ENCODE measurements at regions of chr14 and their contacts with region 1.

Region 1: DNA sequence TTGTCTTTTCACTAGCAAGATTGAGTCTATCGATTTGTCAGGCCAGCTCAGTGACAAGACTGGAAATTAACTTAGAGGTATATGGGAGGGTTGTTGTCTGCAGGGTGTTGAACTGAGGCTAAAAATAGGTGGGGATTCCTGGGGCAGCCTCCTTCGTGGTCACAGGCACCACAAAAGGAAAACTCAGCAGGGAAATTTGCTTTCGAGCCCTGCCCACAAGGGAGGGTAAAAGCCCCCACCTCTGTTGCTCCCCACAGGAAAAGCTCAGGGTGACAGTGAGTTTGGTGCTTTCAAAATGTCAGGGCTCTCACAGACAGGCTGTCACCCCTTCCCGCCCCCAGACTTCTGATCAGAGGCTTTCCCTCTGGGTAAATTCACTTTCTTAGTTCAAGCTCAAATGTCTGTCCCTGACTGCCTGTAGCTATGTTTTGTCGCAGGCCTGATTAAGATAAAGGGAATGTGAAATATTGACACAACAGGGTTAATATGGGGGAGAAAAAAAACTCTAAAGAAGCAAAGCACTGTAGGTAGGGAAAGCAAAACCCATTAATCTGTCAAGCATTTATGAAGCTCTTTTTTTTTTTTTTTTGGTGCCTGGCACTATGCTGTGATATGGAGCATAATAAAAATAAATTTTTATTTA is 11.7 kb upstream of the NFKBIA start:
- DNase-seq: peak; percentile 72
- H3K4me3 Mint-ChIP-seq: peak overlapping the region; percentile 79
- H3K27ac Mint-ChIP-seq: peak overlapping the region; percentile 98
- H3K4me1 Mint-ChIP-seq: peaks cover 64% of the 10 kb centered on the region
- H3K27me3 Mint-ChIP-seq: peaks cover 2% of the 10 kb centered on the region

Region 2: GRCh38 chr14:34629657-34630529 is 786.3 kb before region 1 on chr14 and contains the start of gene SNX6:
- intact Hi-C with region 1: loop called (anchors 5 kb)
- DNase-seq: peak; percentile 76
- H3K4me3 Mint-ChIP-seq: peak within 1 kb of the TSS; percentile 95
- H3K27ac Mint-ChIP-seq: peak within 1 kb of the TSS; percentile 99
- H3K4me1 Mint-ChIP-seq: peaks cover 8% of the 10 kb centered on the region
- H3K27me3 Mint-ChIP-seq: peaks cover 11% of the 10 kb centered on the region
- total RNA-seq, gene SNX6: 70.3 and 75.6 TPM in 2 replicates

Region 3: DNA sequence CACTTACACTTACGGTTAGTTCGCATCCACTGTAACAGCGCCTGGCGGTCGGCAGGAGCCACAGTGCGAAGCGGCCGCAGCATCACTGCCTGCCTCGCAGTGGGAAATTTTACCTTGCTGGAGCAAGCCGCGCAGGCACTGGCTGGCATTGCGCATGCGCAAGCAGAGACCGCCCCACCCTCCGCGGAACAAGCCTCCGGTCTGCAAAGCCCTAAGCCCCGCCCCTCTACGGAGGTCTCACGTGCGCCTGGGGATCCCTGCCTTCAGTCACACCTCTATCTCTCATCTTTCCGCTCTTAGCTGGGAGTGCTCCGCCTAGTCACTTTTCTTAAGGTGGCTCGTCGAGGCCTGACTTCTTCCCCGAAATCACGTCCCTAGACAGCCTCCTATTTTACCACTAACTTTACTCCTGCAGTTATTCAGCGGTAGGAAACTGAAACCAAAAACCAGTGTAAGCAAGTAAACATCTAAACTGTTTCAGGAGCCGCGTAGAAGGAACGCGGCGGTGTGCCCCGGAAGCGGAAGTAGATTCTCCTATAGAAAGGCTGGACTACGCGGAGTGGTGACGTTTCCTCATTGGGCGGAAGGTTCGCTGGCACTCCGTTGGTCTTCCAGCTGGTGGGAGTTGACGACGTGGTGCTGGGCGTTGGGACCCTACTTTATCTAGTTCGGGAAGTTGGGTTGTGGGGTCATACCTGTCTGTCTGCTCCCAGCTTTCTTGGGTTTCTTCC is 433.6 kb before region 1 on chr14 and contains the start of gene SRP54:
- intact Hi-C with region 1: loop called (anchors 1 kb)
- DNase-seq: peak; percentile 100
- H3K4me3 Mint-ChIP-seq: no peak within 1 kb of the TSS
- H3K27ac Mint-ChIP-seq: no peak within 1 kb of the TSS
- H3K4me1 Mint-ChIP-seq: peaks cover 6% of the 10 kb centered on the region
- H3K27me3 Mint-ChIP-seq: no peaks in the 10 kb centered on the region
- total RNA-seq, gene SRP54: 76.1 and 76.2 TPM in 2 replicates

Region 4: GRCh38 chr14:35140718-35141581 is 275.3 kb before region 1 on chr14:
- intact Hi-C with region 1: loop called (anchors 1 kb)
- DNase-seq: no peak
- H3K4me3 Mint-ChIP-seq: no peak overlapping the region
- H3K27ac Mint-ChIP-seq: no peak overlapping the region
- H3K4me1 Mint-ChIP-seq: peaks cover 29% of the 10 kb centered on the region
- H3K27me3 Mint-ChIP-seq: no peaks in the 10 kb centered on the region

Region 5: DNA sequence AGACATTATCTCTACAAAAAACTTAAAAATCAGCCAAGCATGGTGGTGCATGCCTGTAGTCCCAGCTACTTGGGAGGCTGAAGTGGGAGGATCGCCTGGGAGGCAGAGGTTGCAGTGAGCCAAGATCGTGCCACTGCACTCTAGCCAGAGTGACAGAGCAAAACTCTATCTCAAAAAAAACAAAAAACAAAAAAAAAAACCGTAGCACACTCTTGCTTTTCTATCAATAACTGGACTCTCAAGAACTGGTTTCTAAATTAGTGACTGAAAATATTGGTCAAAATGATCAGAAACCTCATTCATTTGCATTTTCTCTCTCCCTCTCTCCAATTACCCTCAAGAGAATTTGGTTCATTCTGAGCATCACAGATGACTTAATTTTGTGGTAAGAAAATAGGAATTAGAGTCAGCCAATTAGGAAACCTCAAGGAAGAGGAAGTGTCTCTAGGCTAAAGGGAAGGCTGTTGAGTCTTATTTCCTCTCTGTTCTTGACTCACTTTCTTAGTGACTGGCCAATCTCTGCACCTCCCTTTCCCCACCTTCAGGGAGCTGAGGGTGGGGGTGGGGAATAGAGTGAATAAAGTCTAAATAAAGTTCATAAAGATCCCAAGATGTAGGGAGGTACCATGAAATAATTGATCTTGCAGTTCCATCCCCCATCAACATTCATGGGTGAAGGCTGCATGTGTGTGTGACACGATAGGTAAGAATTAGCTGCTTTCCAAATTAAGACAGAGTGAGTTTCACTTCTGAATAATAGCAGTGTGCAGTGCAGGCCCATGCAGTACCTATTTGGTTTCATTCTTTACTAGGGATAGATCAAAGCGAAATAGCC is 130.8 kb before region 1 on chr14:
- intact Hi-C with region 1: loop called (anchors 1 kb)
- DNase-seq: peak; percentile 17
- H3K4me3 Mint-ChIP-seq: peak overlapping the region; percentile 53
- H3K27ac Mint-ChIP-seq: peak overlapping the region; percentile 99
- H3K4me1 Mint-ChIP-seq: peaks cover 51% of the 10 kb centered on the region
- H3K27me3 Mint-ChIP-seq: no peaks in the 10 kb centered on the region

Region 6: GRCh38 chr14:35404449-35405303 is 11.6 kb before region 1 on chr14 and contains the start of gene NFKBIA:
- intact Hi-C with region 1: loop called (anchors 1 kb)
- DNase-seq: peak; percentile 95
- H3K4me3 Mint-ChIP-seq: peak within 1 kb of the TSS; percentile 100
- H3K27ac Mint-ChIP-seq: peak within 1 kb of the TSS; percentile 99
- H3K4me1 Mint-ChIP-seq: peaks cover 38% of the 10 kb centered on the region
- H3K27me3 Mint-ChIP-seq: no peaks in the 10 kb centered on the region
- total RNA-seq, gene NFKBIA: 591 and 599 TPM in 2 replicates

Region 7: DNA sequence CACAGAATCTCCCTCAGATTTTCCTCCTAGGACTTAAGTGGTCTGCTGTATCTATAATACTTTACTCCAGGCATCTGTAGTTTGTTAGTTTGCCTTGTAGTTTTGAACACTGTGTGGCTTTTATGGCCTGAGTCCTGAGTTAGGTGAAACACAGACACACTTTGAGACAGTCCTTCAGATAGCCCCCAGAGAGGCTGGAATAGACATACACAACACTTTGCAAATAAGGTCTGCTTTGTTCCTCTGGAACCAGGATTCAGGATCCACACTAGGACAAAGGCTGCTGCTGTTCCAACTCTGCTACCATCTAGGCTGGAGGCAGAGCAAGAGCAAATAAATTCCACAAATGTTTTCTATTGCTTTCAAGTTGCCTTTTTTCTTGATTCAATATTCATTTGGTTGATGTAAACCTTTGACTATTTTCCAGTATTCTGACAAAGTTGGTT is 76.4 kb after region 1 on chr14:
- intact Hi-C with region 1: no loop called
- DNase-seq: no peak
- H3K4me3 Mint-ChIP-seq: no peak overlapping the region
- H3K27ac Mint-ChIP-seq: no peak overlapping the region
- H3K4me1 Mint-ChIP-seq: no peaks in the 10 kb centered on the region
- H3K27me3 Mint-ChIP-seq: no peaks in the 10 kb centered on the region

Region 8: DNA sequence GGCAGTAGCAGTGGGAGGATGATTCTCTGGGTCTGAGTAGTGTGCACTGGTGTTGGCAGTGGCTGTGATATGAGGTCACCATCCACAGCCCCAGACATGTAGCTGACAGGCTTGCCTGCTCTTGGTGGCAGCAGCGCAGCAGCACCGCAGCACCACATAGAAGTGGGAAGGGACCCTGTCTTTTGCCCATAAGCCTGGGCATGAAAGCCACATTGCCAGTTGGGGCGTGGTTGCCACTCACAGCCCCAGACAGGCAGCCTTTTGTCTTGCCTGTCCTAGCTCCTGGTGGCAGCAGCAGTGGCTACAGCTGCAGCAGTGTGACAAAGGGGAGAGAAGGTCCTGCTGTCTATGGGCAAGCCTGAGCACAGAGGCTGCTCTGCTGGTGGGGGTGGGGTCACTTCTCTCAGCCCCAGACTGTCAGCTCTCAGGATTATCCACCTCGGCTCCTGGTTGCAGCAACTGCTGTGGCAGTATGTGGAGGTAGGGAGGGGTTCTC is 481.4 kb after region 1 on chr14:
- intact Hi-C with region 1: no loop called
- DNase-seq: no peak
- H3K4me3 Mint-ChIP-seq: no peak overlapping the region
- H3K27ac Mint-ChIP-seq: no peak overlapping the region
- H3K4me1 Mint-ChIP-seq: no peaks in the 10 kb centered on the region
- H3K27me3 Mint-ChIP-seq: peaks cover 6% of the 10 kb centered on the region